Left lung (tissue), 14 donors: ENCODE measurements at regions of chr1 and their contacts with region 1.

Region 1: DNA sequence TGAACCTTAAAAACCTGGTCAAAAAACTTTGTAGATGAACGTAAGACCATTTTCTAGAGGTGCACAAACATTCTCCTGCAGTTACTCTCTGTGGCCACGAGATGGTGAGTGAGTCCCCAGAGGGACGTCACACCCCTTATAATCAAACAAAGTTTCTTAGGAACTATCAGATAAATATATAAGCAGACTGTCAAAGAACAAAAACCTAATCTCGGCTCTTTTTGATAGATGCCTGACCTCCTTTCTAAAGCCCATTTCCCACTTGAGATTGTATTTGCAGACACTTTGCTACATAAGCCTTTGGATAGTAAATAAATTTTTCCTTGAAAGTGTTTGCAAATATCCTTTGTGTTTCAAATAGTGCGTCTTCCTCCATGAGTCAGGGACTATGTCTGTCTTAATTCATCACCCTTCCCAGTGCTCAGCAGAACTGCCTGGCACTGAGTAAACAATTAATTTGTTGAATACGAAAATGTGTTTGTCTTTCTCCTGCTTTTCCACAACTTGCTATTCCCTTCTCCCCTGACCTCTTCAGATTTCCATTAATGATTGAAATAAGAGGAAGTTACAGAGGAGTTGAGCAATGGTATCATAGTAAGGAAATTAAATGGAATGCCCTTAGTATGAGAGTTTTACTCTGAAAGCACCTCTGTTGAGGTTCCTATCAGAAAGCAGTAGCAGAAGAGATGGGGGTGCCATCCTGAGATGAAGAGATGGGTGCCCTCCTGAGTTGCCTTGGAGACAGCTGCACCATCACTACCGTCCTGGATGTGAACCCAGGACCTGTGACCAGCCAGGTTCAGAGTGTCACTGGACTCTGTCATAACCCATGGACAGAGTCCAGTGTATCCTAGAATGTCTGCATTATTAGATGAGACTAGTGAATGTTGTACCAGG is 57.8 kb upstream of the RAVER2 start:
- DNase-seq: peak in 2 of 4 donors; percentile 39 to 68
- ATAC-seq: peak; percentile 92
- H3K4me3 ChIP-seq: no peak overlapping the region
- H3K27ac ChIP-seq: peak overlapping the region in 1 of 2 donors; percentile 34
- H3K4me1 ChIP-seq: peaks cover 5 to 23% of the 10 kb centered on the region in 2 donors
- H3K27me3 ChIP-seq: no peaks in the 10 kb centered on the region
- CTCF ChIP-seq: peak; percentile 69 to 88

Region 2: DNA sequence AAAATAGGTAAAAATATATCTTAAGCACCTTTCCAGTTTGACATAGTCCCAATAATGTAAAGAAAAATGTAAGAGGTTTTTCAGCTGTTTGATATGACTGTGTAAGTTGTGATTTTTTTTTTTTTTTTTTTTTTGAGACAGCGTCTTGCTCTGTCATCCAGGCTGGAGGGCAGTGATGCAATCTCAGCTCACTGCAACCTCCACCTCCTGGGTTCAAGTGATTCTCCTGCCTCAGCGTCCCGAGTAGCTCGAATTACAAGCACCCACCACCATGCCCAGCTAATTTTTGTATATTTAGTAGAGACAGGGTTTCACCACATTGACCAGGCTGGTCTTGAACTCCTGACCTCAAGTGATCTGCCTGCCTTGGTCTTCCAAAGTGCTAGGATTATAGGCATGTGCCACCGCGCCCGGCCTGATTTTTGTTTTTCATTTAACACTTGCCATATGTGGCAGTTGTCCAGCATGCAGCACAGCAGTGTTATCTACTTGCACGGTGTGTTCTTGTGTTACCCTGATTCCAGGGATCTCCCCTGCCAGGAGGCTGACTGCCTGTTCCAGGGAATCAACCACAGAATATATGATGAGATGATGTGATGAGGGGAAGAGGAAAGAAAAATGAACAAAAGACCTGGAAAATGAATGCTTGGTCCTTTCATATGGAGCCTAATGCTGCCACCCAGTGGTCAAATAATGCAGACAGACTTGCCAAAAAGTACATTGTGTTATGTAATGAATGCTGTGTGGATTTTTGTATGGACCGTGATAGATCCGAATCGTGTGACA is 136.8 kb after region 1 on chr1:
- intact Hi-C with region 1: loop called in 1 of 2 experiments (anchors 5 kb)
- DNase-seq: peak in 2 of 4 donors; percentile 75 to 85
- ATAC-seq: peak; percentile 95
- H3K4me3 ChIP-seq: no peak overlapping the region
- H3K27ac ChIP-seq: no peak overlapping the region
- H3K4me1 ChIP-seq: no peaks in the 10 kb centered on the region
- H3K27me3 ChIP-seq: no peaks in the 10 kb centered on the region
- CTCF ChIP-seq: peak; percentile 61 to 76